Pancreas (tissue), 10 donors: ENCODE measurements at regions of chrX and their contacts with region 1.

Region 1: GRCh38 chrX:81377329-81377728 is 175.4 kb downstream of the SH3BGRL start:
- DNase-seq: no peak
- ATAC-seq: peak in 3 of 4 donors; percentile 39 to 46 (median 40)
- H3K4me3 ChIP-seq: no peak overlapping the region
- H3K27ac ChIP-seq: no peak overlapping the region
- H3K4me1 ChIP-seq: no peaks in the 10 kb centered on the region
- H3K27me3 ChIP-seq: peaks cover 0 to 9% (median 4%) of the 10 kb centered on the region in 4 donors
- CTCF ChIP-seq: peak in 3 of 4 donors; percentile 40 to 58 (median 50)

Region 2: GRCh38 chrX:80876877-80877276 is 500.5 kb before region 1 on chrX:
- intact Hi-C with region 1: loop called in 1 of 3 experiments (anchors 10 kb)
- DNase-seq: no peak
- ATAC-seq: peak in 1 of 4 donors; percentile 42
- H3K4me3 ChIP-seq: no peak overlapping the region
- H3K27ac ChIP-seq: no peak overlapping the region
- H3K4me1 ChIP-seq: no peaks in the 10 kb centered on the region
- H3K27me3 ChIP-seq: peaks cover 0 to 4% (median 0%) of the 10 kb centered on the region in 4 donors
- CTCF ChIP-seq: peak in 3 of 4 donors; percentile 22 to 27 (median 24)

Region 3: GRCh38 chrX:81174286-81174685 is 203.0 kb before region 1 on chrX:
- intact Hi-C with region 1: loop called in 1 of 3 experiments (anchors 10 kb)
- DNase-seq: no peak
- ATAC-seq: peak in 3 of 4 donors; percentile 65 to 74 (median 66)
- H3K4me3 ChIP-seq: no peak overlapping the region
- H3K27ac ChIP-seq: no peak overlapping the region
- H3K4me1 ChIP-seq: peaks cover 0 to 3% (median 0%) of the 10 kb centered on the region in 3 donors
- H3K27me3 ChIP-seq: peaks cover 0 to 6% (median 0%) of the 10 kb centered on the region in 4 donors
- CTCF ChIP-seq: peak in 1 of 4 donors; percentile 13